Heart right ventricle (tissue), 16 donors: ENCODE measurements at regions of chr9 and their contacts with region 1.

Region 1: GRCh38 chr9:11072176-11072575 is 459.4 kb upstream of the PTPRD start:
- DNase-seq: no peak
- ATAC-seq: no peak
- H3K4me3 ChIP-seq: no peak overlapping the region
- H3K27ac ChIP-seq: no peak overlapping the region
- H3K4me1 ChIP-seq: no peaks in the 10 kb centered on the region
- H3K27me3 ChIP-seq: no peaks in the 10 kb centered on the region
- CTCF ChIP-seq: no peak

Region 2: DNA sequence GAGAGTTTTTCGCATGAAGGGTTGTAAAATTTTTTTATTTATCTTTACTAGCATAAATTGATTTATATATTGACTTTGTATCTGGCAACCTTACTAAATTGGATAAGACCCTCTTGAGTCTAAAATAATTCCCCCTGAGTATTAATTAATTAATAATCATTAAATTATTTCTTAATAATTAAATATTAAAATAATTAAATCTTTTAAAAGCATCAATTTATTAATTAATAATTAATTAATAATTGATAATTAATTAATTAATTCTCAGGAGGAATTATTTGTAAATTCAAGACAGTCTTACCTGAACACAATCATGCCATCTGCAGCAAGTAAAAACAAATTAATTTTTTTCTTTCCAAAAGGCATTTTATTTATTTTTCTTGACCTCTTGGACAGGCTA is 88.9 kb before region 1 on chr9:
- intact Hi-C with region 1: no loop called
- DNase-seq: no peak
- ATAC-seq: no peak
- H3K4me3 ChIP-seq: no peak overlapping the region
- H3K27ac ChIP-seq: no peak overlapping the region
- H3K4me1 ChIP-seq: no peaks in the 10 kb centered on the region
- H3K27me3 ChIP-seq: no peaks in the 10 kb centered on the region
- CTCF ChIP-seq: no peak

Region 3: DNA sequence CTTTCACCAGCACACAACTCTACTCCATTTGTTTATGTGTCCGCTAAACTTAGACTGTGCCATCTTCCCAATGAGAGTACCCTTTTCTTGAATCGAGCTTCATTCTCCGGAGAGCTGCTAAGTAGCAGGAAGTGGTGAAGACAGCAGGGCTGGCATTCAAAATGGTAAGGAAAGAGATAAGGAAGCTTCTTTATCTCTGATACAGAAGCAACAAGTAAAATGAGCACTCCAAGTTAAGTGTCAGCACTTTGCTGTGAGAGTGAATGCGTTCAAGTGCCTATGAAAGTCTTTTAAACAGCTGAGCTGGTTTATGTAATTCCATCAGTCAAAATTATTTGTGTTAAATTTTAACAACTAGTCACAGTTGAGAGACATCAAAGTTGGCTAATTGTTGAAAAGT is 72.5 kb before region 1 on chr9:
- intact Hi-C with region 1: loop called in 1 of 10 experiments (anchors 10 kb)
- DNase-seq: no peak
- ATAC-seq: no peak
- H3K4me3 ChIP-seq: no peak overlapping the region
- H3K27ac ChIP-seq: no peak overlapping the region
- H3K4me1 ChIP-seq: no peaks in the 10 kb centered on the region
- H3K27me3 ChIP-seq: no peaks in the 10 kb centered on the region
- CTCF ChIP-seq: no peak

Region 4: GRCh38 chr9:11103525-11103924 is 31.3 kb after region 1 on chr9:
- intact Hi-C with region 1: no loop called
- DNase-seq: no peak
- ATAC-seq: no peak
- H3K4me3 ChIP-seq: no peak overlapping the region
- H3K27ac ChIP-seq: no peak overlapping the region
- H3K4me1 ChIP-seq: no peaks in the 10 kb centered on the region
- H3K27me3 ChIP-seq: no peaks in the 10 kb centered on the region
- CTCF ChIP-seq: no peak

Region 5: DNA sequence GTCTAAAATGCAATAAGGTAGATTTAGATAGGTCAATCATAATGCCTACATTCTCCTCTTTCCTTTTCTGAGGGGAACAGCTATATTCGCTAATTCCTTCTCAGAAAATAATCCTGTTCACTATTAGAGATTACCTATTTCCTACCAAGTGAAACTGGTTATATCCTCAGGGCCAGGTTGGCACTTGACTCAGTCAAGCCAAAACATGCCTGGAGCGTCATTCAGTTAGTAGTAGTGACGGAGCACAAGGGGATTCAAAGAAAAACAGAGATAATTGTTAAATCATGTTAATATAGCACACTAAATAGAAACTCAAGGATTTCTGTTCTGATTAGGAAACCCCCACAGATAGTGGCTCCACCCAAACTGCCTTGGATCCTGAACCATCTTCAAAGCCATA is 56.0 kb after region 1 on chr9:
- intact Hi-C with region 1: no loop called
- DNase-seq: no peak
- ATAC-seq: no peak
- H3K4me3 ChIP-seq: no peak overlapping the region
- H3K27ac ChIP-seq: no peak overlapping the region
- H3K4me1 ChIP-seq: no peaks in the 10 kb centered on the region
- H3K27me3 ChIP-seq: no peaks in the 10 kb centered on the region
- CTCF ChIP-seq: no peak

Region 6: GRCh38 chr9:11149065-11149464 is 76.9 kb after region 1 on chr9:
- intact Hi-C with region 1: no loop called
- DNase-seq: no peak
- ATAC-seq: no peak
- H3K4me3 ChIP-seq: no peak overlapping the region
- H3K27ac ChIP-seq: no peak overlapping the region
- H3K4me1 ChIP-seq: no peaks in the 10 kb centered on the region
- H3K27me3 ChIP-seq: no peaks in the 10 kb centered on the region
- CTCF ChIP-seq: no peak